Right ventricle myocardium inferior (tissue), 1 donor: ENCODE measurements at regions of chr5 and their contacts with region 1.

Region 1: GRCh38 chr5:36690041-36690961 is 83.9 kb downstream of the SLC1A3 start:
- DNase-seq: peak; percentile 92
- ATAC-seq: peak; percentile 56

Region 2: GRCh38 chr5:36177715-36178523 is 512.4 kb before region 1 on chr5:
- intact Hi-C with region 1: loop called (anchors 10 kb)
- DNase-seq: no peak
- ATAC-seq: no peak

Region 3: GRCh38 chr5:36264202-36264760 is 426.0 kb before region 1 on chr5:
- intact Hi-C with region 1: loop called (anchors 10 kb)
- DNase-seq: no peak
- ATAC-seq: no peak

Region 4: DNA sequence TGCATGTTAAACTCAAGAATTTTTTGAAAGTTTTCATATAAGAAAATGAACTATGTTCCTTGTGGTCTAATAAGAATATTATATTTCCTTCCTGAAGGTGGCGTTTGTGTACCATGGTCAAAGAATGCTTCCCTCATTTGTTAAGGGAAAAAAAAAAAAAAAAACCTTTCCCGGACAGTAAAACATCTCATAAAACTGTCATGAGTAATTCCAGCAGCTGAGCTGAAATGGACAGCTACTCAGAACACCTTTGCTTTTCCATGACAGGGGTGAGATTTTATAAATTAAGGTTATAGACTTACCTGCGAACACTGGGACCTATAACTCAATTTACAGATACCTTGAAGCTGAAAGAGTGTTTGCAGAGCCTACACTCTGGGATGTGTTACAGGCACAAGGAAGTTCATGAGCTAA is 275.4 kb before region 1 on chr5:
- intact Hi-C with region 1: loop called (anchors 1 kb)
- DNase-seq: no peak
- ATAC-seq: peak; percentile 57

Region 5: GRCh38 chr5:36507332-36507952 is 182.9 kb before region 1 on chr5:
- intact Hi-C with region 1: loop called (anchors 5 kb)
- DNase-seq: peak; percentile 83
- ATAC-seq: peak; percentile 60

Region 6: DNA sequence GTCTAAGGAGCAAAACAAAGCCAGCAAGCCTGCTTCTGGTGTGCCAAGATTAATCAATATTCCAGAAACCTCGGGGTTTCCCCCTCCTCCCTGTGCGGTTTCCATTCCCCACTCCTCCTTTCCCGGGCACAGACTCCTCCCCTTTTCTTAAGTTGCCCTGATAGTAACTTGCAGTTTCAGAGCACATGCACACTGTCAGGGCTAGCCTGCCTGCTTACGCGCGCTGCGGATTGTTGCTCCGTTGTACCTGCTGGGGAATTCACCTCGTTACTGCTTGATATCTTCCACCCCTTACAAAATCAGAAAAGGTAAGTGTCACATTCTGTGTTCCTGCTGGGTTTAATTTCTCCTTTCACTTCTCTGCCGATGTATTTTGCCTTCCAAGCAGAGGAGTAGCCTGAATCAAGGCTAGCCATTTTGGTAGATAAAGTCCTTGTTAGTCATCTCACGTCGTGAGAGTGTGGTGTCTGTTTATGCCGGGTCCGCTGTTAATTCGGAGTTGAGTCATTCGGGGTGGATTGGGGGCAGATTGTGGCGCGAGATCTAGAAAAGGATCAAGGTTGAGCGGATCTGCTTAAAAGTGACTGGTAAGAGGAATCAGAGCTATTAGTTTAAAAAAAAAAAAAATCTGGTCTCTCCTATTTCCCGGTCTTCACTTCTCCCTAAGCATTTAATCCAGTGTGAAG is 83.7 kb before region 1 on chr5 and contains the start of gene SLC1A3:
- intact Hi-C with region 1: loop called (anchors 1 kb)
- DNase-seq: no peak
- ATAC-seq: peak; percentile 89
- total RNA-seq, gene SLC1A3: 95.4 TPM